PC-9 (cell line): ENCODE measurements at regions of chr9 and their contacts with region 1.

Region 1: DNA sequence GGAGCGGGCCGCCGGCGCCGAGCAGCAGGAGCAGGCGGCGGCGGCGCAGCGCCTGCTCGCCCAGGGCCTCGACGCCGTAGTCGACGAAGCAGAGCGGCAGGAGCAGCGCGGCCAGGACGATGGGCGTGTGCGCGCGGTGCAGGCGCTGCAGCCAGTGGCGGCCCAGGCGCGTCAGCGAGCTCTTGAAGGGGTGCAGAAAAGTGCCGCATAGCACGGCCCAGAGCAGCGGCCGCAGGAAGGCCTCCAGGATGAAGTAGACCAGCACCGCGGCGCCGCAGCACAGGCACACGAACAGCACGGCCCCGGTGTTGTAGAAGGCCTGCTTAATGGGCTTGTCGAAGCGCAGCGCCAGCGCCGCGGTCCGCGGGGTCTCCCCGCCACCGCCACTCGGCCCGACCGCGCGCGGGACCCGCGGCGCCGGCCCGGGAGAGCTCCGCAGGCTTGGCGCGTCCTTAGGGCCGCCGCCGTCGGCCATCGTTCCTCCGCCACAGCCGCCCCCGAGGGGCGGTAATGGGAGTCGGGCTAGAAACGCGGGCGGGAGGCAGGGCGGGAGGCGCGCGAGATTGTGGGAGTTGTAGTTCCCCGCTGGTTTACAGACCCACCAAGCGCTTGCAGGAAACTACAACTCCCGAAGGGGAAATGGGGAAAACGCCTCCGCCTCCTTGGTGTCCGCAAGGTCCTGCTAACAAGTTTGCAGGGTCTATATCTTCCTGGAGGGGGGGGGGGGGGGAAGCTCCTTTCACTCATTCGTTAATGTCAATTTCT is at the start of gene TMEM245:
- DNase-seq: peak; percentile 95 to 97
- H3K4me3 ChIP-seq: peak within 1 kb of the TSS; percentile 81
- H3K27ac ChIP-seq: peak within 1 kb of the TSS; percentile 38
- H3K4me1 ChIP-seq: peaks cover 35% of the 10 kb centered on the region
- H3K27me3 ChIP-seq: no peaks in the 10 kb centered on the region
- CTCF ChIP-seq: no peak
- total RNA-seq, gene TMEM245: 58.7 and 60.3 TPM in 2 replicates

Region 2: GRCh38 chr9:109064963-109065711 is 54.5 kb before region 1 on chr9:
- CTCF ChIA-PET with region 1: no interaction called
- POLR2A ChIA-PET with region 1: interaction called, 6 read pairs
- intact Hi-C with region 1: loop called (anchors 1 kb)
- DNase-seq: peak; percentile 35 to 98
- H3K4me3 ChIP-seq: no peak overlapping the region
- H3K27ac ChIP-seq: peak overlapping the region; percentile 94
- H3K4me1 ChIP-seq: peaks cover 58% of the 10 kb centered on the region
- H3K27me3 ChIP-seq: no peaks in the 10 kb centered on the region
- CTCF ChIP-seq: no peak

Region 3: GRCh38 chr9:109098171-109098959 is 21.3 kb before region 1 on chr9:
- CTCF ChIA-PET with region 1: no interaction called
- POLR2A ChIA-PET with region 1: interaction called, 4 read pairs
- intact Hi-C with region 1: loop called (anchors 1 kb)
- DNase-seq: peak; percentile 48 to 75
- H3K4me3 ChIP-seq: peak overlapping the region; percentile 9; the same call in 1 of the 2 replicates
- H3K27ac ChIP-seq: peak overlapping the region; percentile 93
- H3K4me1 ChIP-seq: peaks cover 68% of the 10 kb centered on the region
- H3K27me3 ChIP-seq: no peaks in the 10 kb centered on the region
- CTCF ChIP-seq: peak; percentile 36; the same call in 1 of the 2 replicates

Region 4: GRCh38 chr9:109143881-109144562 is 24.4 kb after region 1 on chr9:
- CTCF ChIA-PET with region 1: no interaction called
- POLR2A ChIA-PET with region 1: no interaction called
- intact Hi-C with region 1: no loop called
- DNase-seq: peak; percentile 36 to 46
- H3K4me3 ChIP-seq: no peak overlapping the region
- H3K27ac ChIP-seq: no peak overlapping the region
- H3K4me1 ChIP-seq: peaks cover 7% of the 10 kb centered on the region
- H3K27me3 ChIP-seq: no peaks in the 10 kb centered on the region
- CTCF ChIP-seq: peak; percentile 57

Region 5: GRCh38 chr9:109453210-109453842 is 333.7 kb after region 1 on chr9:
- CTCF ChIA-PET with region 1: no interaction called
- POLR2A ChIA-PET with region 1: interaction called, 14 read pairs
- intact Hi-C with region 1: no loop called
- DNase-seq: peak; percentile 85 to 97
- H3K4me3 ChIP-seq: 0 out of 2 replicates have a peak overlapping the region, but pooled peaks have one; percentile 9
- H3K27ac ChIP-seq: peak overlapping the region; percentile 97
- H3K4me1 ChIP-seq: peaks cover 38% of the 10 kb centered on the region
- H3K27me3 ChIP-seq: no peaks in the 10 kb centered on the region
- CTCF ChIP-seq: no peak